GM10248 (cell line): ENCODE measurements at regions of chr1 and their contacts with region 1.

Region 1: DNA sequence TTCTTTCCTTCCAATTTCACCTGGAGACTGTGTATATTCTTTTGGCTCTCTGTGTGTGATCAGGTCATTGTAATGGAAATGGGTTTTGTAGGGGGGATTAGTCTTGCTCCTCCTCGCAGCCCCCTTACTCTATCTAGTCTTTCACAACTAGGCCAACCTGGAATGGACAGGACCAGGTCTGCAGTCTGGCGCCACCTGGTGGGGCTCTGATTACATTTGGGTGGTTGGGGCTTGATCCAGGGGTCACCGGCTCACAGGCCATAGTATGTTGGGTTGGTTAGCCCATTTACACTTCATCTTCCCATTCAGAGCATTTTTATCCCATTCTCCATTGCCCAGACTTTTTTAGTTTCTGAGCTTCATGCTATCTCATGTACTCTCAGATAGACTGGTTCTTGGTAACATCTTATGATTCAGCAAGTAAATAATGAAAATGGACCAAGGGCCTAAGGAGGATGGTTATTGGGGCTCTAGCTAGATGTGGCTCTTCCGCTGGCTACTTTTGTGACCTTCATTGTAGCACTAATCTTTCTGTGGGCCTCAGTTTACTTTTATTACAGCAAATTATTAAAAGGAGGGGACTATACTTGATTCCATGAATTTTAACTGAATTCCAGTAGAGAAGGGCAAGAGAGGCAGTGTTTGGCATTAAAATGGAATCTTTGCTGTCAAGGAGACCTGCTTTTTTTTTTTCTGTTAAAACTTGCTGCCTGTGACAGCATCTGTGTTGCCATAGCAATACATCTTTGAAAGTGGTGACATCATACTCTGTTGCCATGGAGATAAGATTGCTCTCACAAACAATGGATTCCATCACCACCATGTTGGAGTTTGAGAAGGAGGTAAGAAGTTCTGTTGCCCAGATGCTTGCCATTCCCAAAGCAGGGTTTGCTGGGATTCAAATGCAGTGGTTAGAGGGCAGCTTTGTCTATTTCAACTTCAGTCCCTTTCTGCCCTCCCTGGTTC is 150.1 kb downstream of the PLXNA2 start:
- DNase-seq: peak; percentile 72
- CTCF ChIP-seq: peak; percentile 84

Region 2: GRCh38 chr1:208024406-208024805 is 69.6 kb before region 1 on chr1:
- CTCF ChIA-PET with region 1: interaction called, 67 read pairs
- POLR2A ChIA-PET with region 1: no interaction called
- DNase-seq: no peak
- CTCF ChIP-seq: no peak

Region 3: GRCh38 chr1:208029381-208030287 is 64.4 kb before region 1 on chr1:
- CTCF ChIA-PET with region 1: interaction called, 67 read pairs
- POLR2A ChIA-PET with region 1: no interaction called
- DNase-seq: no peak
- CTCF ChIP-seq: no peak

Region 4: GRCh38 chr1:208071435-208072031 is 22.5 kb before region 1 on chr1:
- CTCF ChIA-PET with region 1: interaction called, 26 read pairs
- POLR2A ChIA-PET with region 1: no interaction called
- DNase-seq: no peak
- CTCF ChIP-seq: no peak

Region 5: DNA sequence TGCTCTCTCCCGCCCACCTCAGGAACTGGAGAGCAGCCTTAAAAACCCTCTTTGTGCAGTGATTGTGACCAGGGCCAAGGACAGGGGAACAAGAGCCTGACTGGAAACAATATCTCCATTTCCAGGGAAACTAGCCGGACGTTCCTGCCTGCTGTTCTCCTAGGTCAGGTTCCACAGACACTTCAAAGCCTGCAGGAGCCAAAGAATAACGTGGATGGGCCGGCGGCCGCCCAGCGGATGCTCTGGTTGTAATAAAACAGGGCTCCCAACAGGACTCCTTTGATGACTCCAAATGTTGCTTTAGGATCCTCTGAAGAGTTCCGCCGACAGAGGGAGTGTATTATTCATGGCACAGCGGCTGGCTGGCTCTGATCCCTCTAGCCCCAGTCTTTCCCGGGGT is 12.1 kb before region 1 on chr1:
- CTCF ChIA-PET with region 1: interaction called, 29 read pairs
- POLR2A ChIA-PET with region 1: no interaction called
- DNase-seq: no peak
- CTCF ChIP-seq: no peak

Region 6: GRCh38 chr1:208115924-208116640 is 22.0 kb after region 1 on chr1:
- CTCF ChIA-PET with region 1: interaction called, 12 read pairs
- POLR2A ChIA-PET with region 1: no interaction called
- DNase-seq: no peak
- CTCF ChIP-seq: no peak